MCF 10A (cell line): ENCODE measurements at regions of chr17 and their contacts with region 1.

Region 1: DNA sequence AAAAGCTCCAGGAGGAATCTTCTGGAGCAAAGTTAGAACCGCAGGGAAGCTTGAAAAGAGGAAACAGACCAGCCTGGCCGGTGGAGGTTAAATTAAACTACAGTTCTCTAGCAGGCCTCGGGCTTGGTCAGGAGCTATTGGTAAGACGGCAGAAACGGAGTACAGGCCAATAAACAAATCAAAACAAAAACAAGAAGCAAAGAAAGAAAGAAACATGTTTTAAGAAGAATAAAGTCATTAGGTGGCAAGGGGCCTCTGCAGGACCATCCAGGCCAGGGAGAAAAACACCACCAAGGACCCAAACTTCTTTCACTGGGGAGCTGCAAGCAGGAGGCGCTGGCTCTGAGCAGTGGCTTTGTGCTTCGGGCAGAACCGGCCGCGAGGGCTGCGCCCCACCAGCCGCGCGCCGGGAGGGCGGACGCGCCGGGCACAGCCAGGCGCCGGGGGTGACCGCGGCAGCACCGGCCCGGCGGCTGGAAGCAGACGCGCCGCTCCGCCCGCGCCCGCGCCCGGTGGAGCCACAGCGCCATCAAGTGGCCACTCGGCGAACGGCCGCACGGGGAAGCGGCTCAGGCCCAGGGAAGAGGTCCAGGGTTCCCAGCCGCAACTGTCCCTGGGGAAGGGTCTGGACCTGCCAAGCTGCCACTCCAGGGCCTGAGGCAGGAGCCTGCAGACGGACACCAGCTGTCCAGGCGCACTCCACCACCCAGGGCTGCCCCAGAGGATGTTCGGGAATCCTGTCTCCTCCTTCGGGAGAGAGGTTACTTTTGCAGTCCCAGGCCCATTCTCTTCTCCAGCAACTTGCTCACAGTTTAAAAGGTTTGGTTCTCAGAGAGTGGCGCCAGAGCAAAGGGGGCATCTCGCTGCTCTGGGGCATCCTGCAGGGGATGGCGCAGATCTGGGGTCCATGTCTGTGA is 419.4 kb downstream of the SOX9 start:
- DNase-seq: peak; percentile 59
- H3K4me3 Mint-ChIP-seq: peak overlapping the region; percentile 66
- H3K27ac Mint-ChIP-seq: no peak overlapping the region
- H3K4me1 Mint-ChIP-seq: peaks cover 25% of the 10 kb centered on the region
- H3K27me3 Mint-ChIP-seq: no peaks in the 10 kb centered on the region
- CTCF ChIP-seq: peak; percentile 96

Region 2: DNA sequence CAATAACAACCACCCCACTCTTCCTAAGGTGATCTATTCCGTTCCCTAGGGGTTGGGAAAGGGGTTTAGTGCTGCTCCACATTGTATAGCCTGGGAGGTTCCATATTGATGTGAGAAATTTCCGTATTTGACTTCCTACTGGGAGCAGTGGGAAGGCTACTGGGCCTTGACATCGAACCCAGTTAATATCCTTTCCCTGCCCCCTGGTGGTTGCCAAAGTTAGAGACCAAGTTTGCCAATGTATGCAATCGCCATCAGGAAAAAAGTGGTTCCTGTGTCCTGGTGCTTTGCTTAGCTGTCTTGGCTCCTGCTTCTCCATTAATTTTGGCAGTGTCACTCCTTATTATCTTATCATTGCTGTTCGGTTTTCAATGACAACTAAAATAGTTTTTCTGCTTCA is 1456.0 kb before region 1 on chr17:
- CTCF ChIA-PET with region 1: no interaction called
- POLR2A ChIA-PET with region 1: no interaction called
- intact Hi-C with region 1: loop called (anchors 10 kb)
- DNase-seq: peak; percentile 76
- H3K4me3 Mint-ChIP-seq: no peak overlapping the region
- H3K27ac Mint-ChIP-seq: no peak overlapping the region
- H3K4me1 Mint-ChIP-seq: no peaks in the 10 kb centered on the region
- H3K27me3 Mint-ChIP-seq: no peaks in the 10 kb centered on the region
- CTCF ChIP-seq: peak; percentile 55

Region 3: GRCh38 chr17:71237903-71238538 is 1302.2 kb before region 1 on chr17:
- CTCF ChIA-PET with region 1: interaction called, 3 read pairs
- POLR2A ChIA-PET with region 1: no interaction called
- intact Hi-C with region 1: loop called (anchors 2 kb)
- DNase-seq: peak; percentile 63
- H3K4me3 Mint-ChIP-seq: no peak overlapping the region
- H3K27ac Mint-ChIP-seq: no peak overlapping the region
- H3K4me1 Mint-ChIP-seq: no peaks in the 10 kb centered on the region
- H3K27me3 Mint-ChIP-seq: no peaks in the 10 kb centered on the region
- CTCF ChIP-seq: peak; percentile 56

Region 4: GRCh38 chr17:71976011-71976649 is 564.1 kb before region 1 on chr17:
- CTCF ChIA-PET with region 1: no interaction called
- POLR2A ChIA-PET with region 1: no interaction called
- intact Hi-C with region 1: loop called (anchors 10 kb)
- DNase-seq: peak; percentile 99
- H3K4me3 Mint-ChIP-seq: peak overlapping the region; percentile 69
- H3K27ac Mint-ChIP-seq: peak overlapping the region; percentile 77
- H3K4me1 Mint-ChIP-seq: peaks cover 18% of the 10 kb centered on the region
- H3K27me3 Mint-ChIP-seq: no peaks in the 10 kb centered on the region
- CTCF ChIP-seq: no peak

Region 5: DNA sequence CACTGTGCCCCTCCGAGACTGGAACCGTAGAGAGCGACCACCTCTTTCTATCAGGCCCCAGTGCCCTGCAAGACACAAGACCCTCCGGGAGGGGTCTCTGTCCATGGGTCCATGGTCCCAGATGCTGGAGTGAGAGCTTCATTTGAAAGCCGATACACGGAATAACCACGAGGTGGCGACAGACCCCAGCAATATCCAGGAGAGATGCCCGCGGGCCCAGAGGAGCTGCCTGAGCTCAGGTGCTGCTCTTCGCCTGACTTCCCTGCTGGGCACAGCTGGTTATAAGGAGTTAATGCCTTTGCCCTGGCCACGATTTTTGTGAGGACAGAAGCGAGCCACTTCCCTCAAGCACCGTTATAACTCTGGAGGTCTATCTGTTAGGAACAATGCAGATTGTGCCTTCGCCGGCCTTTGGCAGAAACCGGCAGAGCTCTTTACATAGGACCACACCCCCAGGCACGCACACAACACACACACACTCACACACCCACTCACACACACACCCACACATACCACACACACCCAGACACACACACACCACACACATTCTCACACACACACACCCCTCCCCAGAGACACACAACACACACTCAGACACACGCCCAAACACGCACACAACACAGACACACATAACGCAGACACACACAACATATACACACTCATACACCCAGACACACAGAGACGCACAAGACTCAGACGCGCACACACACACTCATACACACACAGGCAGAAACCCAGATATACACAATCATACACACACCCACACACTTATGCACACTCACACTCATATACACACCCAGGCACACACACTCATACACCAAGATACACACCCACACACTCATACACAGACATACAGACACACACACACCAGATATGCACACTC is 16.9 kb after region 1 on chr17:
- CTCF ChIA-PET with region 1: interaction called, 12 read pairs
- POLR2A ChIA-PET with region 1: no interaction called
- intact Hi-C with region 1: no loop called
- DNase-seq: peak; percentile 81
- H3K4me3 Mint-ChIP-seq: no peak overlapping the region
- H3K27ac Mint-ChIP-seq: no peak overlapping the region
- H3K4me1 Mint-ChIP-seq: peaks cover 21% of the 10 kb centered on the region
- H3K27me3 Mint-ChIP-seq: no peaks in the 10 kb centered on the region
- CTCF ChIP-seq: peak; percentile 85